CD8-positive, alpha-beta memory T cell (primary cell): ENCODE measurements at regions of chr6 and their contacts with region 1.

Region 1: DNA sequence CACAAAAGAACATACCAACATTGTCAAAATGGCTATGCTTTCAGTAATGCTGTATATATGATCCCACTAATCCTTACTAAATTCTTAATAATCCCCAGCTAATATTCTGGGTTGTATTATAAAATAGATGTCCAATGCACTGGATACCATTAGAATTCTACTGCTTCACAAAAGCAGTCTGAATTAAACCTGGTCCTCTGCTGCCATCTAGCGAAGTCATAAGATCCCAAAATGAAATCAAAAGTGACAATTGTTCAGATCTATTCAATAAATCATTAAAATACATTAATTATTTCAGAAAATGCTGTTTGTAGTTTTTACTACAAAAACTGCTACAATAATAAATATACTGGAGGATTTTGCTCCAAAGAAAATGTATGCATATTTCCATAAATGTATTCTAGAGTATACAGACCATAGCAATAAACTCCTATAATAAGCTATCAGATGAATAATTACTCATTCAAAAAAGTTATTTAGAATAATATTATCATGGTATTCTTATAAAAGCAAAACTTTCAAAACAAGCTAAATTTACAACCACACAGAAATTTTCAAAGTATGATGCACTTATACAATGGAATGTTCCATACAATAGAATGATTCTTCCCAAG is 92.6 kb downstream of the RNGTT start:
- DNase-seq: peak in 4 of 5 donors; percentile 10 to 48 (median 32)
- H3K4me3 ChIP-seq: no peak overlapping the region
- H3K4me3 Mint-ChIP-seq: no peak overlapping the region
- H3K27ac ChIP-seq: no peak overlapping the region
- H3K27ac Mint-ChIP-seq: no peak overlapping the region
- H3K4me1 ChIP-seq: no peaks in the 10 kb centered on the region
- H3K4me1 Mint-ChIP-seq: peaks cover 13 to 44% (median 20%) of the 10 kb centered on the region in 3 donors
- H3K27me3 ChIP-seq: no peaks in the 10 kb centered on the region
- H3K27me3 Mint-ChIP-seq: no peaks in the 10 kb centered on the region

Region 2: GRCh38 chr6:87393022-87393622 is 1477.7 kb before region 1 on chr6:
- CTCF ChIA-PET with region 1: interaction called, 11 read pairs
- POLR2A ChIA-PET with region 1: no interaction called
- DNase-seq: peak in 2 of 5 donors; percentile 48 to 57
- H3K4me3 ChIP-seq: no peak overlapping the region
- H3K4me3 Mint-ChIP-seq: no peak overlapping the region
- H3K27ac ChIP-seq: no peak overlapping the region
- H3K27ac Mint-ChIP-seq: no peak overlapping the region
- H3K4me1 ChIP-seq: no peaks in the 10 kb centered on the region
- H3K4me1 Mint-ChIP-seq: no peaks in the 10 kb centered on the region
- H3K27me3 ChIP-seq: no peaks in the 10 kb centered on the region
- H3K27me3 Mint-ChIP-seq: no peaks in the 10 kb centered on the region

Region 3: GRCh38 chr6:88823998-88824397 is 46.8 kb before region 1 on chr6:
- CTCF ChIA-PET with region 1: no interaction called
- POLR2A ChIA-PET with region 1: no interaction called
- DNase-seq: no peak
- H3K4me3 ChIP-seq: no peak overlapping the region
- H3K4me3 Mint-ChIP-seq: no peak overlapping the region
- H3K27ac ChIP-seq: no peak overlapping the region
- H3K27ac Mint-ChIP-seq: no peak overlapping the region
- H3K4me1 ChIP-seq: no peaks in the 10 kb centered on the region
- H3K4me1 Mint-ChIP-seq: peaks cover 20 to 41% (median 34%) of the 10 kb centered on the region in 3 donors
- H3K27me3 ChIP-seq: no peaks in the 10 kb centered on the region
- H3K27me3 Mint-ChIP-seq: peaks cover 0 to 3% of the 10 kb centered on the region in 2 donors

Region 4: GRCh38 chr6:88890860-88891845 is 20.3 kb after region 1 on chr6:
- CTCF ChIA-PET with region 1: no interaction called
- POLR2A ChIA-PET with region 1: no interaction called
- DNase-seq: no peak
- H3K4me3 ChIP-seq: no peak overlapping the region
- H3K4me3 Mint-ChIP-seq: no peak overlapping the region
- H3K27ac ChIP-seq: no peak overlapping the region
- H3K27ac Mint-ChIP-seq: peak overlapping the region in 1 of 8 donors; percentile 12
- H3K4me1 ChIP-seq: no peaks in the 10 kb centered on the region
- H3K4me1 Mint-ChIP-seq: no peaks in the 10 kb centered on the region
- H3K27me3 ChIP-seq: no peaks in the 10 kb centered on the region
- H3K27me3 Mint-ChIP-seq: no peaks in the 10 kb centered on the region